Activated CD8-positive, alpha-beta T cell treated with anti-CD3 and anti-CD28 coated beads, Interleukin-2, amount 10 ng/mL, durations not matched to agents 7 days and 5 days (primary cell): ENCODE measurements at regions of chr19 and their contacts with region 1.

Region 1: DNA sequence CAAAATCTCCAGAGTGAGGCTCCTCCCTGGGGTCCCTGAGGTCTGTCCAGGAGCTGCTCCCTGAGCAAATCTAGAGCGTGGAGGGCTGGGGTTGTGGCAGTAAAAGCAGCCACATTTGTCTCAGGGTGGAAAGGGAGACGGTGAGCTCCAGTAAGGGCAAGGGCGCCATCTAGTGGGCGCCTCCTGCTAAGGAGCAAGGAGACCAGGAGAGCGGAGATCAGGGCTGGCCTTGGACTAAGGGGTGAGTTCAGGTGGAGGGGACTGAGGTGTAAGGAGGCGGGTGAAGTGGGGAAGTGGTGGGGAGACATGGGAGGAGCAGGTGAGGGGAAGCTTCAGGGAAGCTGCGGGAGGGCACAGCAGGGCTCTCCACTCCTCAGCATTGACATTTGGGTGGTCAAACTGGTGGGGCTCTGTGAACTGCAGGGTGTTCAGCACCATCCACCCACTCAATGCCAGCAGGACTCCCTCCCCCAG is 5.3 kb upstream of the CEACAM21 start:
- DNase-seq: peak; percentile 88
- ATAC-seq: peak; percentile 98
- H3K4me3 Mint-ChIP-seq: no peak overlapping the region
- H3K27ac Mint-ChIP-seq: no peak overlapping the region
- H3K4me1 Mint-ChIP-seq: peaks cover 15% of the 10 kb centered on the region
- H3K27me3 Mint-ChIP-seq: peaks cover 13% of the 10 kb centered on the region

Region 2: DNA sequence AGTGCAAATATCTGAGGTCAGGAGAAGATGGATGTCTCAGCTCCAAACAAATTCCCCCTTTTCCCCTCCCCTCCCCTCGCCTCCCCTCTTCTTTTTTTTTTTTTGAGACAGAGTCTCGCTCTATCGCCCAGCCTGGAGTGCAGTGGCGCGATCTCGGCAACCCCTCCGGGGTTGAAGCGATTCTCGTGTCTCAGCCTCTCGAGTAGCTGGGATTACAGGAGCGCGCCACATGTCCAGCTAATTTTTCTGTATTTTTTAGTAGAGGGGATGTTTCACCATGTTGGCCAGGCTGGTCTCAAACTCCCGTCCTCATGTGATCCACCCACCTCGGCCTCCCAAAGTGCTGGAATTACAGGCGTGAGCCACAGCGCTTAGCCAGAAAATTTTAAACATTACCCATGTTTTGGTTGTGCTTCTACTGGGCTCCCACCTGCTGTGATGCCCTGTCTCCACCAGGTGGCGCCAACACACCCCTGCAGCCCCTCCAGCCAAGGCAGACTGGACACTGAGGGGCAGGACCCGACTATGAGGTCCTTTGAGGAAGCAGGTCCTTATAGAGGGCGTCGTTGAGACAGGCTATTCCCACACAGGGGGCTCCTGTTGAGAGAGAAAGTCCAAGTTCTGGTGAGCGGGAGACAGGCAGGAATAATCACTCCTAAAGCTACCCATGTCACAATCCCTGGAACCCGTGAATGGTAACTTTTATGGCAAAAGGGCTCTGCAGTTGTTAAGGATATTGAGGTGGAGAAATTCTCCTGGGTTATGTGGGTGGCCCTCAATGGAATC is 121.4 kb before region 1 on chr19:
- CTCF ChIA-PET with region 1: interaction called, 118 read pairs
- POLR2A ChIA-PET with region 1: no interaction called
- DNase-seq: peak; percentile 78
- ATAC-seq: peak; percentile 88
- H3K4me3 Mint-ChIP-seq: peak overlapping the region; percentile 51
- H3K27ac Mint-ChIP-seq: no peak overlapping the region
- H3K4me1 Mint-ChIP-seq: peaks cover 25% of the 10 kb centered on the region
- H3K27me3 Mint-ChIP-seq: peaks cover 23% of the 10 kb centered on the region

Region 3: DNA sequence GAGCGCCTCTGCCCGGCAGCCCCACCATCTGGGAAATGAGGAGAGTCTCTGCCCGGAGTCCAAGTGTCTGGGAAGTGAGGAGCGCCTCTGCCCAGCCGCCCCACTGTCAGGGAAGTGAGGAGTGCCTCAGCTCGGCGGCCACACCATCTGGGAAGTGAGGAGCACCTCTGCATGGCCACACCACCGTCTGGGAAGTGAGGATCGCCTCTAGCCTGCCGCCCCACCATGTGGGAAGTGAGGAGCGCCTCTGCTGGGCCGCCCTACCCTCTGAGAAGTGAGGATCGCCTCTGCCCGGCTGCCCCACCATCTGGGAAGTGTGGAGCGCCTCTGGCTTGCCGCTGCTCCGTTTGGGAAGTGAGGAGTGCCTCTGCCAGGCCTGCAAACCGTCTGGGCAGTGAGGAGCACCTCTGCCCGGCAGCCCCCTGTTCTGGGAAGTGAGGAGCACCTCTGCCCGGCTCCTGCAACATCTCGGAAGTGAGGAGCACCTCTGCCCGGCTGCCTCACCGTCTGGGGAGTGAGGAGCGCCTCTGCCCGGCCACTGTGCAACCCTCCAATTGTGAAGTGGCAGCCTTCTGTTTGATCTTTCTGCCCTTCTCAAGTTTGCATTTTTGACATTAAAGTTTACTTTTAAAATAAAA is 55.5 kb before region 1 on chr19:
- CTCF ChIA-PET with region 1: no interaction called
- POLR2A ChIA-PET with region 1: no interaction called
- DNase-seq: no peak
- ATAC-seq: no peak
- H3K4me3 Mint-ChIP-seq: no peak overlapping the region
- H3K27ac Mint-ChIP-seq: no peak overlapping the region
- H3K4me1 Mint-ChIP-seq: peaks cover 13% of the 10 kb centered on the region
- H3K27me3 Mint-ChIP-seq: peaks cover 29% of the 10 kb centered on the region

Region 4: DNA sequence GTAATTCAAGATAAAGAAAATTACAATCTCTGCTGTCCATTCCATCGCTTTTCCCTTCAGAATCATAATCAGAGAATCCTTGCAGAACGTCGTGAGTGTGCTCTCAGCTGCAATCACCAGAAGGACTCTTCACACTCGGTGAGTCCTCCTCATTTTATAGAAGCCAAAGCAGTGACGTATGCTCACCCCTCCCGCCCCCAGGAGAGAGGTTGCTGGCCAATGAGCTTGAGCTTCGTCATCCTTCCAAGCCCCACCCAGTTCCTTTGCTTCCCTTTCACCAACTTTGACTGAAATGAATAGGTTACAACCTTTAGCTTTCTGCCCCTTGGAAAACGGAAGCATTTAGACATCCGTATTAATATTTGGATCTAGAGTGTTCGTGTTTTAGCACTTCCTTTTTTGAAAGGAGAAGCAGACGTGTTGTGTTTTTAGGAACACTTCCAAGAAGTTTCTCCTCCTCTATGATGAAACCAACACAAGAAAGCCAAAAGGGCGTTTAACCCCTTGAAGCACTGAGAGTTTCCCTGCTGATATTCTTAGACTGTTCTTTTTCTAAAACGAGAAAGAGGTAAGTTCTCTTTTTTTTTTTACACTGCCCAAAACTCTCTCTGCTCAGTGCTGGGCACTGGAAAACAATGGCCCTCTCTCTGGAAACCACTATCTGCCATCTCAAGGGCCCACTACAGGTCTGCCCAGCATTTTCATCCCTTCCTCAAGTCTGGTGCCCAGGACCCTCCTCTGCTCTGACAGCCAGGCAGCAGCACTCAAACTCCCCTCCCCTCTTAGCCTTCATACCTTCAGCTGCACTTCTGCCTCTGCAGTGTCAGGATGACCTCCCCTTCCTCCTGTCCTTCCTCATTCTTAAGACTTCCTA is 39.0 kb before region 1 on chr19:
- CTCF ChIA-PET with region 1: interaction called, 16 read pairs
- POLR2A ChIA-PET with region 1: interaction called, 3 read pairs
- DNase-seq: peak; percentile 88
- ATAC-seq: peak; percentile 75
- H3K4me3 Mint-ChIP-seq: peak overlapping the region; percentile 73
- H3K27ac Mint-ChIP-seq: peak overlapping the region; percentile 80
- H3K4me1 Mint-ChIP-seq: peaks cover 69% of the 10 kb centered on the region
- H3K27me3 Mint-ChIP-seq: peaks cover 26% of the 10 kb centered on the region

Region 5: GRCh38 chr19:41548954-41549688 is 21.6 kb before region 1 on chr19:
- CTCF ChIA-PET with region 1: interaction called, 86 read pairs
- POLR2A ChIA-PET with region 1: interaction called, 7 read pairs
- DNase-seq: peak; percentile 85
- ATAC-seq: peak; percentile 74
- H3K4me3 Mint-ChIP-seq: peak overlapping the region; percentile 86
- H3K27ac Mint-ChIP-seq: peak overlapping the region; percentile 87
- H3K4me1 Mint-ChIP-seq: peaks cover 47% of the 10 kb centered on the region
- H3K27me3 Mint-ChIP-seq: no peaks in the 10 kb centered on the region

Region 6: GRCh38 chr19:41597600-41598041 is 26.9 kb after region 1 on chr19:
- CTCF ChIA-PET with region 1: interaction called, 14 read pairs
- POLR2A ChIA-PET with region 1: no interaction called
- DNase-seq: peak; percentile 84
- ATAC-seq: peak; percentile 84
- H3K4me3 Mint-ChIP-seq: no peak overlapping the region
- H3K27ac Mint-ChIP-seq: no peak overlapping the region
- H3K4me1 Mint-ChIP-seq: peaks cover 7% of the 10 kb centered on the region
- H3K27me3 Mint-ChIP-seq: peaks cover 27% of the 10 kb centered on the region